Naive thymus-derived CD4-positive, alpha-beta T cell (primary cell): ENCODE measurements at regions of chr5 and their contacts with region 1.

Region 1: GRCh38 chr5:61658592-61659008 is 326.5 kb downstream of the ZSWIM6 start:
- DNase-seq: peak; percentile 40 to 83 (median 66)
- ATAC-seq: peak; percentile 85
- H3K4me3 ChIP-seq: no peak overlapping the region
- H3K4me3 Mint-ChIP-seq: no peak overlapping the region
- H3K27ac ChIP-seq: no peak overlapping the region
- H3K27ac Mint-ChIP-seq: peak overlapping the region in 1 of 9 donors; percentile 6
- H3K4me1 ChIP-seq: no peaks in the 10 kb centered on the region
- H3K4me1 Mint-ChIP-seq: peaks cover 0 to 4% (median 0%) of the 10 kb centered on the region in 7 donors
- H3K27me3 ChIP-seq: no peaks in the 10 kb centered on the region
- H3K27me3 Mint-ChIP-seq: peaks cover 5 to 17% (median 12%) of the 10 kb centered on the region in 5 donors

Region 2: GRCh38 chr5:60677844-60678664 is 980.5 kb before region 1 on chr5:
- CTCF ChIA-PET with region 1: interaction called, 3 read pairs
- POLR2A ChIA-PET with region 1: no interaction called
- intact Hi-C with region 1: loop called (anchors 1 to 5 kb)
- DNase-seq: peak in 2 of 9 donors; percentile 11 to 13
- ATAC-seq: peak; percentile 63
- H3K4me3 ChIP-seq: no peak overlapping the region
- H3K4me3 Mint-ChIP-seq: no peak overlapping the region
- H3K27ac ChIP-seq: no peak overlapping the region
- H3K27ac Mint-ChIP-seq: no peak overlapping the region
- H3K4me1 ChIP-seq: no peaks in the 10 kb centered on the region
- H3K4me1 Mint-ChIP-seq: peaks cover 0 to 20% (median 0%) of the 10 kb centered on the region in 7 donors
- H3K27me3 ChIP-seq: no peaks in the 10 kb centered on the region
- H3K27me3 Mint-ChIP-seq: no peaks in the 10 kb centered on the region

Region 3: GRCh38 chr5:61055434-61056006 is 603.1 kb before region 1 on chr5:
- CTCF ChIA-PET with region 1: interaction called, 22 read pairs
- POLR2A ChIA-PET with region 1: no interaction called
- intact Hi-C with region 1: loop called (anchors 1 kb)
- DNase-seq: peak in 5 of 9 donors; percentile 13 to 46 (median 30)
- ATAC-seq: peak; percentile 51
- H3K4me3 ChIP-seq: no peak overlapping the region
- H3K4me3 Mint-ChIP-seq: no peak overlapping the region
- H3K27ac ChIP-seq: no peak overlapping the region
- H3K27ac Mint-ChIP-seq: no peak overlapping the region
- H3K4me1 ChIP-seq: no peaks in the 10 kb centered on the region
- H3K4me1 Mint-ChIP-seq: peaks cover 0 to 3% (median 0%) of the 10 kb centered on the region in 7 donors
- H3K27me3 ChIP-seq: no peaks in the 10 kb centered on the region
- H3K27me3 Mint-ChIP-seq: no peaks in the 10 kb centered on the region

Region 4: DNA sequence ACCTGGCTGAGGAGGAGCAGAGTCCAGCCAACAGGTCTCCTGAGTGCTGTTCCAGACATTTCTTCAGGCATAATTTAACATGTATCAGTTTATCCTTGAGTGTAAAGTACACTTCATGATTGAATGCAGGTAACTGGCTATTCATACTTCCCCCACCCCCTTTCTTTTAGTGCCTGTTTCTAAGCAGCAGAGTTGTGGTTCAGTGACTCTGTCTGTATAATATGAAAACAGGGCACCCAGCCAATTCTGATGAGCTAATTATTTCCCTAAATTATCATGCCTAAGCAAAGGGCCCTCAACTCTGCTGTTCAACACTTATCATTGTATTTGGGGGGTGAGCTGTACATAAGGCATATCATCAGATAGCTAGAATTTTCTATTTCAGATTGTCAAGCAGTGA is 378.4 kb before region 1 on chr5:
- CTCF ChIA-PET with region 1: no interaction called
- POLR2A ChIA-PET with region 1: no interaction called
- intact Hi-C with region 1: loop called (anchors 1 to 10 kb)
- DNase-seq: peak in 4 of 9 donors; percentile 19 to 28 (median 25)
- ATAC-seq: no peak
- H3K4me3 ChIP-seq: no peak overlapping the region
- H3K4me3 Mint-ChIP-seq: no peak overlapping the region
- H3K27ac ChIP-seq: no peak overlapping the region
- H3K27ac Mint-ChIP-seq: peak overlapping the region in 1 of 9 donors; percentile 2
- H3K4me1 ChIP-seq: peaks cover 0 to 5% of the 10 kb centered on the region in 2 donors
- H3K4me1 Mint-ChIP-seq: peaks cover 16 to 37% (median 21%) of the 10 kb centered on the region in 7 donors
- H3K27me3 ChIP-seq: no peaks in the 10 kb centered on the region
- H3K27me3 Mint-ChIP-seq: no peaks in the 10 kb centered on the region

Region 5: DNA sequence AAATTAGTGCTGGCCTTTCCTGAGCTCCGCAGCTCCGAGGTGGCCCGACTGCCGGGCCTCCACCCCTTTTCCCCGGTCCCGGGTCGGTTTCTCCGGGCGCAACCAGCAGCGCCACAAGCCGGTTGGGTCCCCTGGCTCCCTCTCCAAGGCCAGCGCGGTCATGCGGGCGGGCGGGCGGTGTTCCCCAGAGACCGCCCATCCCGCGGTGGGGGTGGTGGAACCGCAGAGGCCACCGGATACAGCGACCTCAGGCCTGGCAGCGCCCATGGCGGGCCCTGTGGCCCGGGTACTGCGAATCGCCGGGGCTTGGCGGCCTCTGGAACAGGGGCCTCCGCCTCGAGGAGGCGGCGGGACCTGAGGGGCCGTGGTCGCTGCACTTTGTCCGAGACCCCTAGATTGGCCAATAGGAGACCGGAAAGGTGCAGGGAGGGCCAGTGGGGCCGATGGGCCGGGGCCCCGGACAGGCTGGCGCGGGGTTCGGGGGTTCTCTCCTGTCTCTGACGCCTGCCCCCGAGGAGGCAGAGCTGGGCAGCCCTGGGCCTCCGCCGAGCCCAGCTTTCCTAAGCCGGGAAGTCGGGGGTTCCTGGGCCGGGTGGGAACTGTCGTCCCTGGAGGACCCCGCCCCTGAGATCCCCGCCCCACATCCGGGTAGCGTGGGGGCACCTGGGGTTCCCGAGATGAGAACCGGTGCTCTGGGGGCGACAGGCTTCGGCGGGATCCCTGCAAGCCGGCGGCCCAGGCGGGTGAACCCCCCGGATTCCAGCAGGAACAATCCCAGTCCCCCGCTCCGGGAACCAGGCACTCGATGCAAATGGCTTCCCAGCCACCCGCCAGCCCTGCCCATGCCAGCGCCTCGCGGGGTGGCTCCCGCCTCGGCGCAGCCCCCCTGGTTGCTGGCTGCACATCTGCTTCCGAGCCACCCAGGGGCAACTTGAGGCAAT is 32.6 kb before region 1 on chr5:
- CTCF ChIA-PET with region 1: no interaction called
- POLR2A ChIA-PET with region 1: no interaction called
- intact Hi-C with region 1: no loop called
- DNase-seq: peak in 6 of 9 donors; percentile 6 to 34 (median 8)
- ATAC-seq: peak; percentile 77
- H3K4me3 ChIP-seq: peak overlapping the region; percentile 39
- H3K4me3 Mint-ChIP-seq: peak overlapping the region in 9 of 10 donors; percentile 61 to 76 (median 72)
- H3K27ac ChIP-seq: no peak overlapping the region
- H3K27ac Mint-ChIP-seq: no peak overlapping the region
- H3K4me1 ChIP-seq: no peaks in the 10 kb centered on the region
- H3K4me1 Mint-ChIP-seq: peaks cover 0 to 21% (median 12%) of the 10 kb centered on the region in 7 donors
- H3K27me3 ChIP-seq: no peaks in the 10 kb centered on the region
- H3K27me3 Mint-ChIP-seq: peaks cover 34 to 65% (median 35%) of the 10 kb centered on the region in 5 donors

Region 6: GRCh38 chr5:61673007-61673735 is 14.6 kb after region 1 on chr5:
- CTCF ChIA-PET with region 1: interaction called, 10 read pairs
- POLR2A ChIA-PET with region 1: no interaction called
- intact Hi-C with region 1: no loop called
- DNase-seq: no peak
- ATAC-seq: no peak
- H3K4me3 ChIP-seq: no peak overlapping the region
- H3K4me3 Mint-ChIP-seq: no peak overlapping the region
- H3K27ac ChIP-seq: no peak overlapping the region
- H3K27ac Mint-ChIP-seq: no peak overlapping the region
- H3K4me1 ChIP-seq: no peaks in the 10 kb centered on the region
- H3K4me1 Mint-ChIP-seq: peaks cover 0 to 4% (median 0%) of the 10 kb centered on the region in 7 donors
- H3K27me3 ChIP-seq: no peaks in the 10 kb centered on the region
- H3K27me3 Mint-ChIP-seq: peaks cover 1 to 34% (median 18%) of the 10 kb centered on the region in 5 donors